Colonic mucosa (tissue), 4 donors: ENCODE measurements at regions of chr7 and their contacts with region 1.

Region 1: GRCh38 chr7:85041605-85042216 is 145.1 kb downstream of the SEMA3D start:
- DNase-seq: peak; percentile 67
- H3K4me3 ChIP-seq: no peak overlapping the region
- H3K27ac ChIP-seq: no peak overlapping the region
- H3K4me1 ChIP-seq: no peaks in the 10 kb centered on the region
- H3K27me3 ChIP-seq: no peaks in the 10 kb centered on the region
- CTCF ChIP-seq: peak; percentile 44

Region 2: GRCh38 chr7:84536240-84536895 is 505.3 kb before region 1 on chr7:
- intact Hi-C with region 1: no loop called
- DNase-seq: no peak
- H3K4me3 ChIP-seq: no peak overlapping the region
- H3K27ac ChIP-seq: no peak overlapping the region
- H3K4me1 ChIP-seq: no peaks in the 10 kb centered on the region
- H3K27me3 ChIP-seq: no peaks in the 10 kb centered on the region
- CTCF ChIP-seq: no peak

Region 3: GRCh38 chr7:84712326-84713121 is 329.2 kb before region 1 on chr7:
- intact Hi-C with region 1: no loop called
- DNase-seq: no peak
- H3K4me3 ChIP-seq: no peak overlapping the region
- H3K27ac ChIP-seq: no peak overlapping the region
- H3K4me1 ChIP-seq: no peaks in the 10 kb centered on the region
- H3K27me3 ChIP-seq: no peaks in the 10 kb centered on the region
- CTCF ChIP-seq: no peak

Region 4: DNA sequence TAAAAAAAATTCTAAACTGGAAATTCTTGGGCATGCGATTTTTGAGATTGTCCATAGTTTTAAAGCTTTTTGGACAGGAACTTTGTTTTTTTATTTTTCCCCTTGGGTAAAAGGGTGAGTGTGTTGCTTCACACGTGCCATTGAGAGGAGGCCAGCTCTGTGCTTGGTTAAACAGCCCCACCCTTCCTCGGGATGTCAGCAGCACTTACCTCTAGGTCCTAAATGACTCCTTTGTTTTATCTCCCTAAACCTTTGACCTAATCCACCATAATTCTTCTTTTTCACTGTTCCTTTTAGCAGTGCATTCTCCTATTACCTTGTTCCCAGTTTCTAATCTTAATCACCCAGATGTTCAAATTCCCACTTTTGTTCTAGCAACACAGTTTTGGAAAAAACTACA is 61.6 kb after region 1 on chr7:
- intact Hi-C with region 1: no loop called
- DNase-seq: peak; percentile 21
- H3K4me3 ChIP-seq: no peak overlapping the region
- H3K27ac ChIP-seq: no peak overlapping the region
- H3K4me1 ChIP-seq: no peaks in the 10 kb centered on the region
- H3K27me3 ChIP-seq: no peaks in the 10 kb centered on the region
- CTCF ChIP-seq: no peak

Region 5: DNA sequence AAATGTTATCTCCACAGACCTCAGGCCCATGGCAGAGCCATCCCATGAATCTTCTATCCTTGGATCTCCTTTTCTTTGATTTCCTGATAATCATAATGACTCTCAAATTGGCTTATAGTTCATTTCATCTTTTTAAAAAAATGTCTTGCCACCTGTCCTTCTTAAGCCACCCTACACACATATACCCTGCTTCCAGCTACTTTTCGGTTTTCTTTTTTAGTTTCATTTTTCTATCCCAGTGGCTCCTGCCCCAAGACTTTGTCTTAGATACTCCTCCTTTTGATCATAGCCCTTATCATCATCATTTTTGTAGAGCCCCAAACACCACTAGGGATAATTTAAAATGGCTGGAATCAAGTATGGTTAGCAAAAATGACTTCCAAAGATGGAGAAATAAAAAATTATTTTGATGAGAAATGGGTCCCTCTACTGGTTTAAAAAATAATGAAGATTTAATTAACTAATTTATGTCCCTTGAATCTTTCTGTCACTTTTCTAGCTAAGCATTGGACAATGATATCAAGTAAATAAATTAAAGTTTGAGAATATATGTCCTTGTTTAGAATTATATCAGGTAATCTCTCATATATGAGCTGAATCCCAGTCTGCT is 422.4 kb after region 1 on chr7:
- intact Hi-C with region 1: loop called (anchors 10 kb)
- DNase-seq: no peak
- H3K4me3 ChIP-seq: no peak overlapping the region
- H3K27ac ChIP-seq: no peak overlapping the region
- H3K4me1 ChIP-seq: no peaks in the 10 kb centered on the region
- H3K27me3 ChIP-seq: no peaks in the 10 kb centered on the region
- CTCF ChIP-seq: no peak

Region 6: GRCh38 chr7:85554236-85555178 is 512.8 kb after region 1 on chr7:
- intact Hi-C with region 1: loop called (anchors 5 kb)
- DNase-seq: peak; percentile 20
- H3K4me3 ChIP-seq: no peak overlapping the region
- H3K27ac ChIP-seq: no peak overlapping the region
- H3K4me1 ChIP-seq: no peaks in the 10 kb centered on the region
- H3K27me3 ChIP-seq: no peaks in the 10 kb centered on the region
- CTCF ChIP-seq: peak; percentile 63

Region 7: GRCh38 chr7:85829817-85830432 is 788.2 kb after region 1 on chr7:
- intact Hi-C with region 1: loop called (anchors 5 kb)
- DNase-seq: no peak
- H3K4me3 ChIP-seq: no peak overlapping the region
- H3K27ac ChIP-seq: no peak overlapping the region
- H3K4me1 ChIP-seq: no peaks in the 10 kb centered on the region
- H3K27me3 ChIP-seq: no peaks in the 10 kb centered on the region
- CTCF ChIP-seq: no peak